ENCODE measurements at regions of chr11 and their contacts with region 1.

Region 1: GRCh38 chr11:74570266-74571061 is 21.9 kb upstream of the POLD3 start:
- DNase-seq: peak; percentile 35
- H3K4me3 ChIP-seq: no peak overlapping the region
- H3K27ac ChIP-seq: no peak overlapping the region
- H3K4me1 ChIP-seq: no peaks in the 10 kb centered on the region
- H3K27me3 ChIP-seq: no peaks in the 10 kb centered on the region
- CTCF ChIP-seq: peak; percentile 78 to 82

Region 2: DNA sequence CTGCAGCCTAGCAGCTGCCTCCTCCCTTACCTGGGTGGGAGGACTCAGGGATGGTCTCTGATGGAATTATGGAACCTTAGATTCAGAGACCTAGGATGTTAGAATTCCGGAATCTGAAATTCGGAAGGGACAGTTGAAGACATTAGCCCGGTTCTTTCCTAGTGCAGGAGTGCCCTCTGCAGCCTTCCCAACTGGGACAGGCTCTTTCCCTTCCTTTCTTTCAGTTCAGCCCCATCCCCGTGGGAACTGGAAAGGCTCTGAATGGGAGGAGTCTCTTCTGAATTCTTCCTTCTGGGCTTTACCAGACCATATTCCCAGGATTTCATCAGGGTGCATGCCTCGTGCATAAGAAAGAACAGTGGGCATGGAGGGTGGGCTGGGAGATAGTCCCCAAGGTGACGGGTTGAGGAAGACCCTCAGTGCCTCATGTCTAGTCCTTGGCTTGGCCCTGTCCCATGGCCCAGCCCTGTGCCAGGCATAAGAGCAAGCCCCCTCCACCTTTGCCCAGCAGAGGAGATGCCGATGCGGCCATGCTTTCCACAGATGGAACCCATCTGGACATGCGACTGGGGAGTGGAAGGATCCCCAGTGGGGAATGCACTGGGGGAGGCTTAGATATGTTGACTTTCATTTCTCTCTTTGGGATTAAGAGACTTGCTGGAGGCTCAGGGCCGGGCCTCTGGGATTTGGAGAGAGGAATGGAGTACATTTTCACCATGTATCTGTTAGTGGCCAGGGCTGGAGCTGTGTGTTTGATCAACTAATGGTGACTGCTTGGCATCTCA is 605.2 kb before region 1 on chr11:
- CTCF ChIA-PET with region 1: no interaction called
- dilution Hi-C with region 1: no loop called
- in situ Hi-C with region 1: no loop called
- intact Hi-C with region 1: loop called (anchors 1 kb)
- DNase-seq: no peak
- H3K4me3 ChIP-seq: no peak overlapping the region
- H3K27ac ChIP-seq: no peak overlapping the region
- H3K4me1 ChIP-seq: no peaks in the 10 kb centered on the region
- H3K27me3 ChIP-seq: no peaks in the 10 kb centered on the region
- CTCF ChIP-seq: no peak

Region 3: GRCh38 chr11:74330075-74330858 is 240.2 kb before region 1 on chr11:
- CTCF ChIA-PET with region 1: no interaction called
- dilution Hi-C with region 1: loop called (anchors 10 kb)
- in situ Hi-C with region 1: no loop called
- intact Hi-C with region 1: no loop called
- DNase-seq: peak; percentile 61
- H3K4me3 ChIP-seq: no peak overlapping the region
- H3K27ac ChIP-seq: no peak overlapping the region
- H3K4me1 ChIP-seq: peaks cover 4% of the 10 kb centered on the region
- H3K27me3 ChIP-seq: no peaks in the 10 kb centered on the region
- CTCF ChIP-seq: no peak

Region 4: GRCh38 chr11:74371279-74372049 is 199.0 kb before region 1 on chr11:
- CTCF ChIA-PET with region 1: no interaction called
- dilution Hi-C with region 1: no loop called
- in situ Hi-C with region 1: no loop called
- intact Hi-C with region 1: no loop called
- DNase-seq: peak; percentile 78
- H3K4me3 ChIP-seq: no peak overlapping the region
- H3K27ac ChIP-seq: peak overlapping the region; percentile 3
- H3K4me1 ChIP-seq: no peaks in the 10 kb centered on the region
- H3K27me3 ChIP-seq: no peaks in the 10 kb centered on the region
- CTCF ChIP-seq: no peak

Region 5: DNA sequence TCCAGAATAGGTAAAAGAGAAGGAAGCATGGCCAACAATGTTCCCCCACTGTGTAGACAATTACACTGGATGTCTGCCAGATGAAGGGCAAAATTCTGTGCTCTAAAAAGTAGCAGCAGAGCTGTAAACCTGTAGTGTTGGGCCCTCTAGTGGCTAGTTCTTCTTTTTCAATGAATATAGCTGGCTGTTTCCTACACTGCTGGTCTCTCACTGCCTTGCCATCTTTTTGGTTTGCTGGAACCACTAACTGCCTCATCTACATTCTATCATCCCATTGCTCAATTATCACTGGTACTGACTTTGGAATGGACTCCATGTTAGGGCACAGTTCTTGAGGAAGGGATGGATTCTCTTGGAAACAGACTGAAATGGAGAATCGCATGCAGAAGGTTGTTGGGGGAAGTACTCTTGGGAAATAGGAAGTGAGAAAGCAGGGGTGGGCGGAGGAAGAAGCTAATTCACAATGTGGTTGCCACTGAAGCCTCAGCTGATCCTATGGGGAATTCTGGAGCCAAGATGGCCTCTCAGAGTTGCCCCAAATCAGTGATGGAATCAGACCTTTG is 121.0 kb before region 1 on chr11:
- CTCF ChIA-PET with region 1: interaction called, 72 read pairs
- dilution Hi-C with region 1: loop called (anchors 10 kb)
- in situ Hi-C with region 1: loop called (anchors 5 kb)
- intact Hi-C with region 1: loop called (anchors 1 kb)
- DNase-seq: peak; percentile 60
- H3K4me3 ChIP-seq: no peak overlapping the region
- H3K27ac ChIP-seq: no peak overlapping the region
- H3K4me1 ChIP-seq: no peaks in the 10 kb centered on the region
- H3K27me3 ChIP-seq: no peaks in the 10 kb centered on the region
- CTCF ChIP-seq: peak; percentile 67 to 74

Region 6: DNA sequence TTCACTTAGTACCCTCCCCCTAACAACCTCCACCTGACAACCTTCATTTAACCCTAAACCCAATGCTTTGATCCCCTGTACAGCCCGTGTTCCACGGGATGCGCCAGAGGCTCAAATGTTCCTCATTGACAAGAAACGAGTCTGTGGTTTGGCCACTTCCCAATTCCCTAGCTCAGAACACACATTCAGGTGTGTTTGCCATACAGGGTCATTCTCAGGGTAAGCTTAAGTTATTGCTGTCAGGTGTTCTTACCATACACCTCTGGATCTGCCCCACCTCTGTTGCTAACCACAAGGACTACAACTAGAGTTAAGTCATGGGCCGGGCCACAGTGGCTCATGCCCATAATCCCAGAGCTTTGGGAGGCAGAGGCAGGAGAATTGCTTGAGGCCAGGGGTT is 23.7 kb before region 1 on chr11:
- CTCF ChIA-PET with region 1: interaction called, 30 read pairs
- dilution Hi-C with region 1: no loop called
- in situ Hi-C with region 1: no loop called
- intact Hi-C with region 1: no loop called
- DNase-seq: peak; percentile 94
- H3K4me3 ChIP-seq: no peak overlapping the region
- H3K27ac ChIP-seq: no peak overlapping the region
- H3K4me1 ChIP-seq: no peaks in the 10 kb centered on the region
- H3K27me3 ChIP-seq: peaks cover 8% of the 10 kb centered on the region
- CTCF ChIP-seq: no peak

Region 7: DNA sequence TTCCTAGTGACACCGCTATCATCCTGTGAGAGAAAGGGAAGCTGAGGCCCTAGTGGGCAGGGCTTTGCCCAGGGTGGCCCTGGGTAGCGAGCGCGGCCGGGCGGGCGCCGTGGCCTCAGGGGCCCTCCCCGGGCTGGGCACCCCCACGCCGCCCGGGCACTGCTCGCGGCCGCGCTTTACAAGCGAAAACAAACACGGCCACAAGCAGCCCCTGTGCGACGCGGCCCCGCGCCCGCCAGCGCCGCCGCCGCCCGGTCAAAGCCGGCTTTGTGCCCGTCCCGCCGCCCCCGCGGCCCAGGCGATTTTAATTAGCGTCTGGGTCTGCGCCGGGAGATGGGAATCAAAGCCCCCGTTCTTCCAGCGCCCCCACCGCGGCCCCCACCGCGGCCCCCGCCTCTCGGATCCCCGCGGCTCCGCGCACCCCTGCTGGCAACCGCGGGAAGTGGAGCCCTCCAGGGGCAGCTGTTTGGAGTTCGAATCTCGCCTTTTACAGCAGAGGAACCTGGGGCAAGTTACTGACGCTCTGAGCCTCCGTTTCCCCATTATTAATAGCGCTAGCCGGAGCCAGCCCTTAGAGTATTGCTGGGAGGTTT is 112.9 kb after region 1 on chr11:
- CTCF ChIA-PET with region 1: no interaction called
- dilution Hi-C with region 1: no loop called
- in situ Hi-C with region 1: no loop called
- intact Hi-C with region 1: no loop called
- DNase-seq: no peak
- H3K4me3 ChIP-seq: peak overlapping the region; percentile 7 to 28 (median 9)
- H3K27ac ChIP-seq: no peak overlapping the region
- H3K4me1 ChIP-seq: peaks cover 6% of the 10 kb centered on the region
- H3K27me3 ChIP-seq: no peaks in the 10 kb centered on the region
- CTCF ChIP-seq: peak; percentile 11 to 49

Measured in mammary epithelial cell (primary cell).